ENCODE measurements at regions of chr15 and their contacts with region 1.

Region 1: GRCh38 chr15:59492389-59493377 is 54.7 kb downstream of the FAM81A start:
- DNase-seq: peak; percentile 66 to 76 (median 72)
- ATAC-seq: peak; percentile 95
- H3K4me3 ChIP-seq: no peak overlapping the region
- H3K27ac ChIP-seq: no peak overlapping the region
- H3K4me1 ChIP-seq: peaks cover 9% of the 10 kb centered on the region
- H3K27me3 ChIP-seq: no peaks in the 10 kb centered on the region
- CTCF ChIP-seq: peak; percentile 60 to 93 (median 90)
- POLR2A ChIP-seq: no peak

Region 2: DNA sequence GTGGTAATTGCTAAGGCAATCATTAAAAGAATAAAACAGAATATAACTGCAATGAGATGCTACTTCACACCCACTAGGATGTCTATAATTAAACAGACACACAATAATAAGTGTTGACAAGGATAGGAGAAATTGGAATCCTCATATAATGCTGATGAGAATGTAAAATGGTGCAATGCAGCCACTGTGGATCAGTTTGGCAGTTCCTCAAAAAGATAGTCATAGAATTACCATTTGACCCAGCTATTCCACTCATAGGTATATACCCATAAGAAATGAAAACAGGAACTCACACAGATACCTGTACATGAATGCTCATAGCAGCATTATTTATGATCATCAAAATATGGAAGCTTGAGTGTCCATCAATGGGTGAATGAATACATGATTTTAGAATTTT is 514.8 kb before region 1 on chr15:
- intact Hi-C with region 1: loop called (anchors 10 kb)
- DNase-seq: no peak
- ATAC-seq: no peak
- H3K4me3 ChIP-seq: no peak overlapping the region
- H3K27ac ChIP-seq: no peak overlapping the region
- H3K4me1 ChIP-seq: no peaks in the 10 kb centered on the region
- H3K27me3 ChIP-seq: no peaks in the 10 kb centered on the region
- CTCF ChIP-seq: no peak
- POLR2A ChIP-seq: no peak

Region 3: DNA sequence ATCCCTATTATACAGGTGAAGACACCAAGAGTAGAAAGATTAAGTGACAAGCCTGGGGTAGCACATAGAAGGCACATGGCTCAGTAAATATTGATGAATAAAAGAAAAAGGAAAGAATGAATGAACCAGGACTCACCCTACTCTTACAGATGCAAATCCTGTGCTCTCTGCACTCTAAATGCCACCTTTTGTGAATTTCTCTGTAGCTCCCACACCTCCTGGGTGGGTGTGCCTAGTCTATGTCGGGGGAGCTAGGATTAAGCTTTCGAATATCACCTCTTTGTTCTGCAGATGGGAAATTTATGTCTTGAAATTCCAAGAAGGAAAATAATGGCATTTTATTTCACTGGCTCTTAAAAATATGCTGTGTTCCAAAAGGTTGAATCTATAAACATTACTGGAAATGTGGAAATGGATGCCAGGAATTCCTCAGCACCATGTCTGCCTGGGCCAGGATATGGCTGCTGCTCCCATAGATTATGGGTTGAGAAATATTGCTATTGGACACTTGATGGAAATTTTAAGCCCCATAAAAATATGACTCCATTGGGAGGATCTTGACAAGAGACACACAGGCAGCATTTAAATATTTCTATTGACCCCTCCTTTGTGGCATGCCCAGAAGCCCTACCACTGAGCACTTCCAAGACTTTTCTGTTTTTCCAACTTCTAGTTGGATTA is 344.4 kb before region 1 on chr15:
- intact Hi-C with region 1: loop called (anchors 10 kb)
- DNase-seq: no peak
- ATAC-seq: no peak
- H3K4me3 ChIP-seq: no peak overlapping the region
- H3K27ac ChIP-seq: no peak overlapping the region
- H3K4me1 ChIP-seq: no peaks in the 10 kb centered on the region
- H3K27me3 ChIP-seq: no peaks in the 10 kb centered on the region
- CTCF ChIP-seq: no peak
- POLR2A ChIP-seq: no peak

Region 4: DNA sequence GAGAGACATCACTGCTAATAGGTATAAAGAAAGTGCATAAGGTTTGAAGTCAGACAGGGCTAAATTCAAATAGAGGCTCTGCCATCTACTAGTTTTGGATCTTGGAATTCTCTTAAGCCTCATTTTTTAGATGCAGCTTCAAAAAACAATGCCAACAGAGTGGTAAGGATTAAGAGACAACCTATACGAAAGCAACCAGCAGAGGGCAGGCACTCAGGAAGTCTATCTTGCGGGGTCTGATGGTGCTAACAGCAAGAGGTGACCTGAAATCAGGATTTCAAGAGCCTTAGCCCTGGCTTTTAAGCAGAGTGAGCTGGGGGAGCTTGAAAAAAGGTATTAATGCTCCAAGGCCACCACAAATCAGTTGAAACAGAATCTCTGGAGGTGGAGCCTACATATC is 245.3 kb before region 1 on chr15:
- intact Hi-C with region 1: loop called (anchors 10 kb)
- DNase-seq: peak; percentile 52 to 68 (median 63)
- ATAC-seq: peak; percentile 64
- H3K4me3 ChIP-seq: no peak overlapping the region
- H3K27ac ChIP-seq: no peak overlapping the region
- H3K4me1 ChIP-seq: no peaks in the 10 kb centered on the region
- H3K27me3 ChIP-seq: no peaks in the 10 kb centered on the region
- CTCF ChIP-seq: peak; percentile 5 to 59 (median 51)
- POLR2A ChIP-seq: no peak

Measured in body of pancreas (tissue), 4 donors.